A549 (cell line): ENCODE measurements at regions of chr17 and their contacts with region 1.

Region 1: GRCh38 chr17:78250891-78251794 is 19.7 kb downstream of the TMEM235 start:
- DNase-seq: peak; percentile 90 to 98
- ATAC-seq: peak; percentile 81 to 90
- H3K4me3 ChIP-seq: no peak overlapping the region
- H3K27ac ChIP-seq: peak overlapping the region; percentile 52 to 73; a peak in 5 of 6 replicates
- H3K4me1 ChIP-seq: peaks cover 10% of the 10 kb centered on the region
- CTCF ChIP-seq: peak; percentile 100
- EP300 ChIP-seq: no peak
- POLR2A ChIP-seq: no peak
- RAD21 ChIP-seq: peak; percentile 98

Region 2: GRCh38 chr17:77501101-77501566 is 750.0 kb before region 1 on chr17:
- CTCF ChIA-PET with region 1: no interaction called
- POLR2A ChIA-PET with region 1: no interaction called
- DNase-seq: peak; percentile 55 to 57
- ATAC-seq: 0 out of 6 replicates have a peak, but pooled peaks of 1 of the 2 experiments have one; percentile 17
- H3K4me3 ChIP-seq: no peak overlapping the region
- H3K27ac ChIP-seq: no peak overlapping the region
- H3K4me1 ChIP-seq: no peaks in the 10 kb centered on the region
- CTCF ChIP-seq: peak; percentile 61
- EP300 ChIP-seq: no peak
- POLR2A ChIP-seq: no peak
- RAD21 ChIP-seq: peak; percentile 23 to 48; a peak in 2 of 5 replicates

Region 3: GRCh38 chr17:77634710-77635109 is 616.4 kb before region 1 on chr17:
- CTCF ChIA-PET with region 1: no interaction called
- POLR2A ChIA-PET with region 1: no interaction called
- DNase-seq: no peak
- ATAC-seq: no peak
- H3K4me3 ChIP-seq: no peak overlapping the region
- H3K27ac ChIP-seq: no peak overlapping the region
- H3K4me1 ChIP-seq: no peaks in the 10 kb centered on the region
- CTCF ChIP-seq: no peak
- EP300 ChIP-seq: no peak
- POLR2A ChIP-seq: no peak
- RAD21 ChIP-seq: no peak

Region 4: GRCh38 chr17:78040440-78041385 is 210.4 kb before region 1 on chr17:
- CTCF ChIA-PET with region 1: interaction called, 14 read pairs
- POLR2A ChIA-PET with region 1: no interaction called
- DNase-seq: peak; percentile 66 to 81
- ATAC-seq: peak; percentile 97 to 98
- H3K4me3 ChIP-seq: peak overlapping the region; percentile 47
- H3K27ac ChIP-seq: peak overlapping the region; percentile 77 to 89
- H3K4me1 ChIP-seq: peaks cover 11% of the 10 kb centered on the region; the same call in 2 of the 3 replicates
- CTCF ChIP-seq: no peak
- EP300 ChIP-seq: no peak
- POLR2A ChIP-seq: peak; percentile 88
- RAD21 ChIP-seq: no peak

Region 5: GRCh38 chr17:78186692-78187595 is 64.2 kb before region 1 on chr17 and contains the starts of genes AFMID and TK1:
- CTCF ChIA-PET with region 1: interaction called, 30 read pairs
- POLR2A ChIA-PET with region 1: no interaction called
- DNase-seq: peak; percentile 99 to 100
- ATAC-seq: peak; percentile 93 to 94
- H3K4me3 ChIP-seq: peak within 1 kb of the TSS; percentile 72
- H3K27ac ChIP-seq: peak within 1 kb of the TSS; percentile 82 to 88
- H3K4me1 ChIP-seq: peaks cover 32% of the 10 kb centered on the region
- CTCF ChIP-seq: peak; percentile 89
- EP300 ChIP-seq: no peak
- POLR2A ChIP-seq: peak; percentile 95
- RAD21 ChIP-seq: peak in 1 of 2 experiments; percentile 29; a peak in 1 of 5 replicates
- polyA plus RNA-seq, gene AFMID: 33.4 and 59.8 TPM in 2 replicates
- polyA plus RNA-seq, gene TK1: 86.1 and 90.9 TPM in 2 replicates

Region 6: DNA sequence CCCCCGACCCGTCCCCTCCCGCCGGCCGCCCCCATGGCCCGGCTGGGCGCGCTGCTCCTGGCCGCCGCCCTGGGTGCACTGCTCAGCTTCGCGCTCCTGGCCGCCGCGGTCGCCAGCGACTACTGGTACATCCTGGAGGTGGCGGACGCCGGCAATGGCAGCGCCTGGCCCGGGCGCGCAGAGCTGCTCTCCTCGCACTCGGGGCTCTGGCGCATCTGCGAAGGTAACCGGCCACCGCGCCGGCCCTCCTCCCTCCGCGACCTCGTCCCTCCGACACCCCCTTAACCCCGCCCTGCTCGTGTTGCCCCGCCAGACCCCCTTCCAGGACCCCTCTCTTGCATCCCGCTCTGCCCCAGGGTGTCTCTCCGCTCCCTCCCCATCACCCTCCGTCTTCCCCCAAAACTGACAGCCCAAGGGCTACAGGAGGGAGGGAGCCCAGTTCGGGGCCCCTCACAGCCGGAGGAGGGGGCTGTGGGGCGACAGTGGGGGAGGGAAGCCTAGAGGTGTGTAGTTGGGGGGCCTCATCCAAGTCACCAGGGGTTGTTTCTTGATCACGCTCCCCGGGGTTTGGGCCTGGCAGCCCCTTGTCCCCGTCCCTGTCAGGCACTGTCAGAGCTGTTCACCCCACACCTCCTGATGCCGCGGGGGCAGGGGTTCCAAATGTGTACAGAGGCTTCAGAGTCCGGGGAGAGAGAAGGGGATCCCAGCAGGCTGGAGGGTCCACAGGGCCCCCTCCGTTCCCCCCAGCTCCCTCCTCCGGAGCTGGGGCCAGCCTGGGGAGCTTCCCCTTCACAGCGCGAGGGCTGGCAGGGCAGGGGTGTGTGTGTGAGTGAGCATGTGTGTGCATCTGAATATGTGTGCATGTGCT is 18.9 kb before region 1 on chr17:
- CTCF ChIA-PET with region 1: interaction called, 159 read pairs
- POLR2A ChIA-PET with region 1: no interaction called
- DNase-seq: no peak
- ATAC-seq: peak in 1 of 2 experiments; percentile 38; a peak in 3 of 6 replicates
- H3K4me3 ChIP-seq: peak overlapping the region; percentile 35; the same call in 2 of the 3 replicates
- H3K27ac ChIP-seq: peak overlapping the region in 1 of 2 experiments; percentile 61; a peak in 2 of 6 replicates
- H3K4me1 ChIP-seq: no peaks in the 10 kb centered on the region; the same call in 2 of the 3 replicates
- CTCF ChIP-seq: no peak
- EP300 ChIP-seq: no peak
- POLR2A ChIP-seq: no peak
- RAD21 ChIP-seq: no peak

Region 7: GRCh38 chr17:78300962-78301822 is 50.0 kb after region 1 on chr17:
- CTCF ChIA-PET with region 1: interaction called, 15 read pairs
- POLR2A ChIA-PET with region 1: no interaction called
- DNase-seq: peak in 1 of 2 experiments; percentile 39
- ATAC-seq: peak; percentile 32 to 64; a peak in 3 of 6 replicates
- H3K4me3 ChIP-seq: no peak overlapping the region
- H3K27ac ChIP-seq: peak overlapping the region; percentile 13 to 38; a peak in 5 of 6 replicates
- H3K4me1 ChIP-seq: peaks cover 17% of the 10 kb centered on the region
- CTCF ChIP-seq: no peak
- EP300 ChIP-seq: no peak
- POLR2A ChIP-seq: no peak
- RAD21 ChIP-seq: no peak

Region 8: DNA sequence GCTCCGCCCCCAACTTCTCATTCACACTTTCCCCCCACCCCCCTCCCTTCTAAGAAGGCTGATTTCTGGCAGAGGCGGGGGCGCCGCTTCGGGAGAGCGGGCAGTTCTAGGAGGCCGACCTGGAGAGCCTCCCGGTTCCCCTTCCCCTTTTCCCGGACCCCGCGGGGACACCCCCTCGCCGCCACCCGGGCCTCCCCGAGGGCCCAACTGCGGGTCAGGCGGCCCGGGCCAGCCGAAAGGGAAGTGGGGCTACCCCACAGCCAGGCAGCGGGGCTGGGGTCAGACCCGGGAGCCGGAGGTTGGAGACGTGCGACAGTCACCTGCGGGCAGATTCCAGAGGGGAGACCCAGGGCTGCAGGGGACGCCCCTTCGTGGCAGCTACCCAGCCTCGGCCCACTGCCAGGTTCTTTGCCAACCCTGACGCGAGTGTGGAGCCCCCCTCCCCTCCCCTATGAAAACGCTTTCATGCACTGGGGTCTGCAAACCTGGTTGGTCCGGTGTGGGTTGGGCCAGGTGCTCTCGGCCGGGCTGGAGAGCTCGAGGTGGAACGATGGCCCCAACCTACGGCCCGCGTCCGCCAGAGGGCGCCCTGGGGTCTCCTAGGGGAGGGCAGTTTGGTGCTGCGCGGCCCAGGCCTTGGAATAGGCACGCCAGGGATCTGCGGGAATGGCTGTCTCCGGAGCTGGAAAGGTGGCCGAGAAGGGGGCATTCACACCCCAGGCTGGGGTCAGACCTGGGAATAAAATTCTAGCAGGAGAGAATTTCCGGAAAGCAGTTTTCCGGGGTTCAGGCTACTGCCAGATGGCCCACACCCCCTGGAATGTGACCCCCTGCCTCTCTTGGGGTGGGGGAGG is 109.5 kb after region 1 on chr17:
- CTCF ChIA-PET with region 1: interaction called, 36 read pairs
- POLR2A ChIA-PET with region 1: interaction called, 4 read pairs
- DNase-seq: peak; percentile 92 to 99
- ATAC-seq: peak; percentile 54 to 81
- H3K4me3 ChIP-seq: peak overlapping the region; percentile 86
- H3K27ac ChIP-seq: peak overlapping the region; percentile 93 to 96
- H3K4me1 ChIP-seq: peaks cover 35% of the 10 kb centered on the region
- CTCF ChIP-seq: peak; percentile 96
- EP300 ChIP-seq: peak in 1 of 2 experiments; percentile 3; a peak in 1 of 5 replicates
- POLR2A ChIP-seq: no peak
- RAD21 ChIP-seq: peak; percentile 90 to 96

Region 9: GRCh38 chr17:78759203-78759968 is 508.2 kb after region 1 on chr17:
- CTCF ChIA-PET with region 1: no interaction called
- POLR2A ChIA-PET with region 1: no interaction called
- DNase-seq: no peak
- ATAC-seq: no peak; a peak in 1 of 6 replicates
- H3K4me3 ChIP-seq: no peak overlapping the region
- H3K27ac ChIP-seq: no peak overlapping the region
- H3K4me1 ChIP-seq: 0 out of 3 replicates have a peak, but pooled peaks cover 2% of the 10 kb centered on the region
- CTCF ChIP-seq: no peak
- EP300 ChIP-seq: no peak
- POLR2A ChIP-seq: no peak
- RAD21 ChIP-seq: no peak